H1 (cell line): ENCODE measurements at regions of chr10 and their contacts with region 1.

Region 1: GRCh38 chr10:29608062-29608461 is 26.7 kb downstream of the SVIL start:
- DNase-seq: no peak
- H3K4me3 ChIP-seq: no peak overlapping the region
- H3K27ac ChIP-seq: no peak overlapping the region
- H3K4me1 ChIP-seq: peaks cover 0 to 3% (median 0%) of the 10 kb centered on the region in 4 experiments; a peak in 2 of 7 replicates
- H3K27me3 ChIP-seq: no peaks in the 10 kb centered on the region
- CTCF ChIP-seq: peak in 1 of 3 experiments; percentile 8; a peak in 1 of 4 replicates
- EP300 ChIP-seq: no peak
- POLR2A ChIP-seq: no peak
- RAD21 ChIP-seq: no peak

Region 2: DNA sequence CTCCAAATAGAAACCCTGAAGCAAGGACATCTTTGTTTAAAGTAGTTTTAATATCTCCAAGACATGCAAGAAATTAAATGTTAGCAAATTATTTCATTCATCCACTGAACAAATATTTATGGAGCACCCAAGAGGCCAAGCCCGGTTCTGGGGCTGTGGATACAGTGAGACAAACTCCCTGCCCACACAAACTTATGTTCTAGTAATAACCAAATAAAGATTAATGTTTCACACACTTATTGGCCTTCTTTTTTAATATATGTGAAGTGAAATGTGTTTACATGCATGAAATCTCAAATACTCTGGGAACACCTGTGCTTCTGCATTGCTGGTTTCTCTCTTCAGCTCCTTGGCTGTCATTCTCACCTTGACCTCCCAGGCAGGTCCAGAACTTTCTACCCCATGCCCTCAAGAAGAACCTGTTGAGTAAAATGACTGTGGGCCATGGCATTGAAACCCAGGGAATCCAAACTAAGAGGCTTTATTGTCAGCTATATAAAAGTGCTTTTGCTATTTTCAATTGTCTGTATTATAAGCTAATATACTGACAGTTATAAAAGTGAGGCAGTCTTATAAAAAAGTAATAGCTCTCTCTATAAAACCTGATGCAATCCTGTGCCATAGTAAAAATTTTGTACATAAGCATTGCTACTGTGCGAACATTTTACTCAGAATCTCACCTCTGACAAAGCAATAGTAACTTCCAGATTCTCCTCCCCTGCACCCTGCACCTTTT is 17.0 kb before region 1 on chr10:
- CTCF ChIA-PET with region 1: interaction called, 12 read pairs
- POLR2A ChIA-PET with region 1: interaction called, 4 read pairs
- DNase-seq: no peak
- H3K4me3 ChIP-seq: no peak overlapping the region
- H3K27ac ChIP-seq: no peak overlapping the region
- H3K4me1 ChIP-seq: peaks cover 9 to 19% (median 17%) of the 10 kb centered on the region in 4 experiments
- H3K27me3 ChIP-seq: no peaks in the 10 kb centered on the region
- CTCF ChIP-seq: no peak
- EP300 ChIP-seq: no peak
- POLR2A ChIP-seq: no peak
- RAD21 ChIP-seq: no peak

Region 3: GRCh38 chr10:29618341-29619171 is 10.5 kb after region 1 on chr10:
- CTCF ChIA-PET with region 1: interaction called, 12 read pairs
- POLR2A ChIA-PET with region 1: interaction called, 4 read pairs
- DNase-seq: no peak
- H3K4me3 ChIP-seq: no peak overlapping the region
- H3K27ac ChIP-seq: no peak overlapping the region
- H3K4me1 ChIP-seq: peaks cover 3 to 17% (median 11%) of the 10 kb centered on the region in 4 experiments
- H3K27me3 ChIP-seq: no peaks in the 10 kb centered on the region
- CTCF ChIP-seq: no peak
- EP300 ChIP-seq: no peak
- POLR2A ChIP-seq: no peak
- RAD21 ChIP-seq: no peak